Right ventricle myocardium inferior (tissue), 1 donor: ENCODE measurements at regions of chr14 and their contacts with region 1.

Region 1: DNA sequence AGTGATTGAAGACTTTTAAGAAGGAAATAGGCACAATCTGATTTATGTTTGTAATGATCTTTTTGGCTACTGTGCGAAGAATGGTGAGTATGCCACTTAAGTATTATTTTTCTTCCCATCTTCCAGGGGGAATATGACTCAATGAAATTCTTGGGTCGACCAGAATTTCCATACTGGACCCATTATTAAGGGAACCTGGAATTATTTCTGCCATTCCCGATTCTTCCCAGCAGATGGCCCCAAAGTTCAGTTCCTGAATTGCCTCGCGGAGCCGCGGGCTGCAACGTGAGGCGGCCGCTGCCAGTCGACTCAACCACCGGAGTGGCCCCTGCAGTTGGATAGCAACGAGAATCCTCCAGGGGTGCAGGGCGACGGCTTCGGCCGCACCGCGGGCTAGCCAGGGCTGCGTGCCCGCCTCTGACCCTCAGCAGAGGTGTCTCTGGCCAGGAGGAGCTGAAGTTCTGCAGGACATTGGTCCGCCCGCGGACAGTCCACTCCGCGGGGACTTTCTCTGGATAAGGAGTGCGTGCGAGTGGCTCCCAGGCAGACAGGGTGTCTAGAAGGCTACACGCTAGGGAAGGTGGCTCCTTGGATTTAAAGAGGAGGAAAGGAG is 628 bp upstream of the TSHR start:
- DNase-seq: peak; percentile 92
- ATAC-seq: peak; percentile 87

Region 2: DNA sequence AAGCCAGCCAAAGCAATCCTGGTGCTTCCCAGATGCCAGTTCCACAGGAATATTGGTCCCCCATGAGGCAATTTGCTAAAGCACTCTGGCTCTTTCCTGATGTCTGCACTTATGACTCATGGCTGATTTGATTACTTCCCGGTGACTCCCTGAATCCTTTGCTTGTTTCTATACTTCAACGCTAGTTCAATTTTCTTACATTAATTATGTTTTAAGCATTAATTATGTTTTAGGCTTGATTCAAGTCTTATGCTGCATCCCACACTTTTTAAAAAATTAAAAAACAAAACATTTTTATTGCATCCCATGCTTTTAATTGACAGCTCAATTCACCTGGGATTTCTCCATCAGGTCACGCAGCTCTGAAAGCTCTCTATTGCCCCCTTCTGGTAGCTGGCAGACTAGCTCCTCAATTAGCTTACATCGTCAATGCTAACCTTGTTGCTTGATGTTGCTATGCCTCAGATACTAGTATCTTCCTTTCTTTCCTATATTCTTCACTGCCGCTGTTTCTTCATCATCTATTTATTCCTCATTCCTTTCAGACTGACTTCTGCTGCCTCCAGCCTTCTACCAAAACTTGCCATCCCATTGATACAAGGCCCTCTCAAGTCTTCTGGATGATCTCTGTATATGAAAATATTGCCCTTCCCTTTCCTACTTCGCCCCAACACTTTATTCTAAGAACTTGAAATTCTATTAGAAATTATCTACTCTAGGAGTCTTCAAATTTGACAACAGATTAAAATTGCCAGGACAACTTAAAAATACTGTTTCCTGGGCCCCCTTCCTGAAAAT is 32.6 kb after region 1 on chr14:
- intact Hi-C with region 1: loop called (anchors 1 kb)
- DNase-seq: no peak
- ATAC-seq: peak; percentile 75

Region 3: DNA sequence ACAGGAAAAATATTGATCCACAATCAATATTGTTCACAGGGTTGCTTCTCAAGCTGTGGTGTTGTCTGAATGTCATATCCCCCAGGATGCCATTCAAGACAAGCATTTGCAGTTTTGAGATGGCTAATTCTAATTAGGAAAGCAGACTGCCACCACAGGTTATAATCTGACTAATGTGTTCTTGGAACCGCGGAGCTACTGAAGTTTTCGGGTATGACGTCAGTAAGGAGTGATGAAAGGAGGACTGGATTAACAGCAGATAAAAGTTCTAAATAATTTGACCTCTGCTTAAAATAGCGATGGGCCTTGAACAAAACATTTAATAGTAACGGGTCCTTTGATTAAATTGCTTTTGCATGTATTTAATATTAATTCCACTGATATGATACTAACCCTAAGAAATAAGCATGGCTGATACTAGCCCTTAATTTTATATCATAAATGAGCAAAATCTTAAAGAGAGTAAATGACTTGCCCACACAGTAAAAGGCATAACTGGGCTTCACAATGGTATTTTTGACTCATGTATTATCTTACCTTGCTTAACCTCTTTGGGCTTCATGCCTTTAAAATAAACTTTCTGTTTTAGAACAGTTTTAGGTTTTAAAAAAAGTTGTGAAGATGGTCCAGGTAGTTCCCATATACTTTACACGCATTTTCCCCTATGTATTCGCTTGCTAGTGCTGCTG is 50.9 kb after region 1 on chr14:
- intact Hi-C with region 1: no loop called
- DNase-seq: no peak
- ATAC-seq: no peak

Region 4: GRCh38 chr14:81211844-81212243 is 257.1 kb after region 1 on chr14:
- intact Hi-C with region 1: loop called (anchors 5 kb)
- DNase-seq: no peak
- ATAC-seq: peak; percentile 83

Region 5: DNA sequence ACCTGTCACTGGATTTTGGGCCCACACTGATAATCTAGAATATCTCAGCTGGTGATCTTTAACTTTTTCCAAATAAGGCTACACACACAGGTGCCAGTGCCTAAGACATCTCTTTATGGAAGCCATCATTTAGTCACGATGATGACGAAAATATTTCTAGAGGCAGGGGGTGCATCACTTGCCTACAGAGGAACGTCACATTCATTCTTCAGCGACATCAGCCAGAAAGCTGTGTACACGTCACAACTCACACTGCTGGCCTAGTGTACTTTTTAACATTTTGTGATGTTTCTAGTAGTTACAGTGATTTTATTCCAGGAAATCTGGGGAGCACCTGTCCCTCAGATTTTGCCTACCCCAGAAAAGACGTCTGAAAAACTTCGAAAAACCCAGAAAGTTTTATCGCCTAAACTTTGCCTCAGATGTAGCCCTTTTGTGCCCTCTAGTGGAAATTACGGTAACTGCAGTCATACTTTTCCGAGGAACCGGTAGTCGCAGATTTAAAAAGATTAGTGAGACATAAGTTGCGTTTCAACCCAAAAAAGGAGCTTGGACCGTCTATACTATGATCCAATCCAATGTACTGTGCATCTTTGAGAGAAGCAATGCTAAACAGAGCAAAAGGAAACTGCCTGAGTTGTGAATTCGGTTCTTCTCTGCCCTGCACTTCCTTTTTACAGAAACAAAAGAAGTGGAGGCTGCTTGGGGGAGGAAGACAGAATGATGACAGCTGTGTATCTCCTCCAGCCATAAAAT is 509.6 kb after region 1 on chr14:
- intact Hi-C with region 1: loop called (anchors 10 kb)
- DNase-seq: no peak
- ATAC-seq: no peak